GM12878 (cell line): ENCODE measurements at regions of chr6 and their contacts with region 1.

Region 1: DNA sequence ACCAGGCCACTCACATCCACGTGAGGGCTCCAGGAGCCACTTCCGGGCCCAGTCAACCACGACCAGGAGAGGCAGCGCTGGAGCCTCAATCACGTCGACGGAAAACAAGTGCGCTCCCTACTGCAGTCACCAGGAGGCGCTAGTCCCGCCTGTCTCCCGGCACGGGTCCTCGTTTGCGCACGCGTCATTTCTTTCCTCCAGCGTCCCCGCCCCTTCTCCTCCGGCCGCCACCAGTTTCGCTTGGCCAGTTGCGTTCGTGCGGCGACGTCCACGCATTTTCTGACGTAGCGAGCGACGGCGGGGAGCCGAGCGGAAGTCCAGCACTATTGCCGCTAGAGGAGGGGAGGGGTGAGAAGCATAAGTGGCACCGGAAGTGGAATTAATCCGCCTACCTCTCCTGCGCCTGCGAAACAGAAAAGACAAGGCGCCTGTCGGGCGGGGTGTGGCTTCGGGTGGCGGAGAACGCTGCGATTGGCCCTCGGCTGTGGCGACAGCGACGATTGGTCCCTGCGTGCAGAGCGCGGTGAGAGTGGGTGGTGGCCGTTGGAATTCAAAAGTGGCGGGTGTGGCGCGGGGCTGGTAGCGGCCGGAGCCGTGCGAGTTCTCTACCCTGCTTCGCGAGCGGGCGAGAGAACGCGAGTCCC is at the start of gene KIFC1:
- DNase-seq: peak; percentile 99
- ATAC-seq: peak; percentile 97
- H3K4me3 ChIP-seq: peak within 1 kb of the TSS; percentile 74
- H3K27ac ChIP-seq: peak within 1 kb of the TSS; percentile 91
- H3K4me1 ChIP-seq: peaks cover 6% of the 10 kb centered on the region
- H3K27me3 ChIP-seq: no peaks in the 10 kb centered on the region
- CTCF ChIP-seq: peak; percentile 93 to 98 (median 98); a peak in 5 of 6 replicates
- EP300 ChIP-seq: 0 out of 4 replicates have a peak, but pooled peaks have one; percentile 13 to 18
- POLR2A ChIP-seq: peak; percentile 90
- RAD21 ChIP-seq: peak; percentile 47
- polyA plus RNA-seq, gene KIFC1: 1.8 to 2.9 TPM

Region 2: GRCh38 chr6:33417903-33418689 is 26.7 kb after region 1 on chr6 and contains the start of gene CUTA:
- CTCF ChIA-PET with region 1: interaction called, 9 read pairs
- POLR2A ChIA-PET with region 1: interaction called, 4 read pairs
- RAD21 ChIA-PET with region 1: no interaction called
- SMC1A ChIA-PET with region 1: interaction called, 8 read pairs
- in situ Hi-C with region 1: no loop called
- intact Hi-C with region 1: loop called (anchors 2 kb)
- DNase-seq: peak; percentile 99
- ATAC-seq: peak; percentile 91
- H3K4me3 ChIP-seq: peak within 1 kb of the TSS; percentile 98
- H3K27ac ChIP-seq: peak within 1 kb of the TSS; percentile 97
- H3K4me1 ChIP-seq: peaks cover 30% of the 10 kb centered on the region
- H3K27me3 ChIP-seq: no peaks in the 10 kb centered on the region; a peak in 2 of 4 replicates
- CTCF ChIP-seq: peak; percentile 41 to 48 (median 43); a peak in 4 of 6 replicates
- EP300 ChIP-seq: no peak; a peak in 1 of 4 replicates
- POLR2A ChIP-seq: peak; percentile 86
- RAD21 ChIP-seq: no peak
- polyA plus RNA-seq, gene CUTA: 268 to 293 TPM

Region 3: DNA sequence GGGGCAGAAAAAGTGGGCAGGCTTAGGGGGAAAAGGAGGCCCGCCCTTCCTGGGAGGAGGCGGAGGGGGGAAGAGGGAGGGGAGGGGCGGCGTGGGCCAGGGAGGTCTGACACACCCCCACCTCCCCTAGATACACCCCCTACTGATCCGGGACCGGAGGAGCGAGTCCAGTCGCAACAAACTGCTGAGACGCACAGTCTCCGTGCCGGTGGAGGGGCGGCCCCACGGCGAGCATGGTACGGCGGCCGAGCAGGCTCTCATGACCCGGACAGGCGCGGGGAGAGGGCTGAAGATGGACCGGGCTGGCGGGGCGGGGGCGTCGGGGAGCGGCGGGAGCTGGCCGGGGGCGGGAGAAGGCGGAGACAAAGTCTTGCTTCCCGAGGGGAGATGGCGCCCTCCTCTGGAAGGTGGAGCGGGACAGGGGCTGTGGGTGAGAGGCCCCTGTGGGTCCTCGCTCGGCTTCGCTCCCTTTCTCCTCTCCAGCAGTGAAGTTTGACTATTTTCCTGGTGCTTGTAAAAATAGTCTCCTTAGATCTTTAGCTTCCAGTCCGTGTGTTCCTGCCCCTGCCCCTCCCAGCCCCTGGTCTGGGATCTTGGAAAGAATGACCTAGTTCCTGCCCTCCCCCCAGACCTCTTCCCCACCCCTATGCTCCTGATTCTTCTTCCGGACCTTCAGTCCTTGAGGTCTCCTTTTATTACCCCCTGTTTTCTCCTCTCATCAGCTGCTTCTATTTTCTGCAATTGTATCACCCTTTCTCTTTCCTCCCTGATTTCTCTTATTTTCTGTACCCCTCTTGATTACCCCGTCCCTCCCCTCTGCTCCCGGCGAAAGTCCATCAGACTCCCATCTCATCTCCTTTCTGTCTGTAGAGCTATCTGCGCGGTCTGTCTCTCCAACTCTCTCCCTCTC is 34.5 kb after region 1 on chr6:
- CTCF ChIA-PET with region 1: interaction called, 19 read pairs
- POLR2A ChIA-PET with region 1: interaction called, 14 read pairs
- RAD21 ChIA-PET with region 1: interaction called, 11 read pairs
- SMC1A ChIA-PET with region 1: interaction called, 6 read pairs
- in situ Hi-C with region 1: no loop called
- intact Hi-C with region 1: loop called (anchors 2 kb)
- DNase-seq: no peak
- ATAC-seq: peak; percentile 77
- H3K4me3 ChIP-seq: peak overlapping the region; percentile 66
- H3K27ac ChIP-seq: peak overlapping the region; percentile 86
- H3K4me1 ChIP-seq: peaks cover 36% of the 10 kb centered on the region
- H3K27me3 ChIP-seq: no peaks in the 10 kb centered on the region; a peak in 2 of 4 replicates
- CTCF ChIP-seq: peak; percentile 46 to 72 (median 69)
- EP300 ChIP-seq: no peak
- POLR2A ChIP-seq: peak; percentile 83
- RAD21 ChIP-seq: peak; percentile 54

Region 4: GRCh38 chr6:33535104-33535603 is 143.8 kb after region 1 on chr6:
- CTCF ChIA-PET with region 1: no interaction called
- POLR2A ChIA-PET with region 1: no interaction called
- RAD21 ChIA-PET with region 1: no interaction called
- SMC1A ChIA-PET with region 1: no interaction called
- in situ Hi-C with region 1: no loop called
- intact Hi-C with region 1: no loop called
- DNase-seq: no peak
- ATAC-seq: no peak
- H3K4me3 ChIP-seq: no peak overlapping the region
- H3K27ac ChIP-seq: no peak overlapping the region
- H3K4me1 ChIP-seq: no peaks in the 10 kb centered on the region
- H3K27me3 ChIP-seq: no peaks in the 10 kb centered on the region
- CTCF ChIP-seq: peak in 1 of 3 experiments; percentile 11; a peak in 1 of 6 replicates
- EP300 ChIP-seq: no peak
- POLR2A ChIP-seq: no peak
- RAD21 ChIP-seq: no peak